PC-9 (cell line): ENCODE measurements at regions of chr5 and their contacts with region 1.

Region 1: GRCh38 chr5:72268753-72269410 is 51.2 kb downstream of the MRPS27 start:
- DNase-seq: peak; percentile 61 to 66
- H3K4me3 ChIP-seq: no peak overlapping the region
- H3K27ac ChIP-seq: no peak overlapping the region
- H3K4me1 ChIP-seq: no peaks in the 10 kb centered on the region
- H3K27me3 ChIP-seq: no peaks in the 10 kb centered on the region
- CTCF ChIP-seq: peak; percentile 89

Region 2: DNA sequence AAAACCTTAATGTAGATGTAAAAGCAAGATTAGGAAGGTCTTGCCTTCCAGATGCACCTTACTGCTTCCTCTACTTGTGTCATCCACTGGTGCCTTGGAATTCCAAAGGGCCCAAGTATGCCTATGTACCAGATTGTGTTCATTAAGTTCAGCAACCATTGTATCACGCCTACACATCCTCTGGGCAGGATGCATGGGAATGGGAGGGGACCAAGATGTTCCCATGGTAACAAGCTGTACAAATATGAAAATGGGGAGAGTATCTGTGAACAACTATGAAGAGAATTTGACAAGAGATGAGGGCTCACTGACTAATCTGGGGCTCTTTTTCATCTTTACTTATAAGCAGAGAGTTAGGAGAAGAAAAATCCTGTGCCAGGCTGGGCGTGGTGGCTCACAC is 299.4 kb before region 1 on chr5:
- CTCF ChIA-PET with region 1: no interaction called
- POLR2A ChIA-PET with region 1: no interaction called
- intact Hi-C with region 1: no loop called
- DNase-seq: no peak
- H3K4me3 ChIP-seq: no peak overlapping the region
- H3K27ac ChIP-seq: no peak overlapping the region
- H3K4me1 ChIP-seq: no peaks in the 10 kb centered on the region
- H3K27me3 ChIP-seq: no peaks in the 10 kb centered on the region
- CTCF ChIP-seq: no peak

Region 3: DNA sequence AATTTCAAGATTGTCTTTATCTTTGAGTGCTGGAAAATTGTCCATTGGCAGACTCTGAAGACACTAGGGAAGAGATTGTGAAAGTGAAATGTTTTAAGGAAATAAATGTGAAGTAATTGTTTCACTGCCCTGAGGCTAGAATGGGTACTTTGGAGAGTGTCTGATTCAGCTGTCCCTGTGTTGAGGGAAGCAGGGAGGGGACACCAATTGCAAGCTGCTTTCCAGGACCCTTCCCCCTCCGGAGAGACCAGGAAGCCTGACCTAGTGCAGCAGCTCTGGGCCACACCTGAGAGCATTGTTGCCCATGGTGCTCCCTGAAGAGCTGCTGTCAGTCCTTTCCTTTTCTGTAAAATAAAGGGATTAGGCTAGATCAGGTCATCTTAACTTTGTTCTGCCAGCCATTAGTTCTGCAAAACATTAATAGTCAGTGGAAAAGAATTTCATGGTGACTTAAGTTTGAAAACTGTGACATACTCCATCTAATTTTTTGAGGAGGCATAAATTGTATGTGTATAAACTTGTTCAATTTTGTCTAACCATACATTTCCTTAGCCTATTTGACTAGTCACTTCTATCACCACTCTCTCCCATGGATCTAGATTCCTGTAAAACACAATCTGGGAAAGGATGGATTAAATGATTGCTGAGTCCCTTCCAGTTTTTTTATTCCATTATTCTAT is 142.8 kb before region 1 on chr5:
- CTCF ChIA-PET with region 1: no interaction called
- POLR2A ChIA-PET with region 1: no interaction called
- intact Hi-C with region 1: loop called (anchors 1 kb)
- DNase-seq: peak; percentile 66 to 81
- H3K4me3 ChIP-seq: no peak overlapping the region
- H3K27ac ChIP-seq: peak overlapping the region; percentile 46
- H3K4me1 ChIP-seq: peaks cover 25% of the 10 kb centered on the region
- H3K27me3 ChIP-seq: no peaks in the 10 kb centered on the region
- CTCF ChIP-seq: no peak

Region 4: GRCh38 chr5:72138943-72139521 is 129.8 kb before region 1 on chr5:
- CTCF ChIA-PET with region 1: no interaction called
- POLR2A ChIA-PET with region 1: no interaction called
- intact Hi-C with region 1: loop called (anchors 2 kb)
- DNase-seq: no peak
- H3K4me3 ChIP-seq: no peak overlapping the region
- H3K27ac ChIP-seq: no peak overlapping the region
- H3K4me1 ChIP-seq: peaks cover 27% of the 10 kb centered on the region
- H3K27me3 ChIP-seq: no peaks in the 10 kb centered on the region
- CTCF ChIP-seq: no peak

Region 5: DNA sequence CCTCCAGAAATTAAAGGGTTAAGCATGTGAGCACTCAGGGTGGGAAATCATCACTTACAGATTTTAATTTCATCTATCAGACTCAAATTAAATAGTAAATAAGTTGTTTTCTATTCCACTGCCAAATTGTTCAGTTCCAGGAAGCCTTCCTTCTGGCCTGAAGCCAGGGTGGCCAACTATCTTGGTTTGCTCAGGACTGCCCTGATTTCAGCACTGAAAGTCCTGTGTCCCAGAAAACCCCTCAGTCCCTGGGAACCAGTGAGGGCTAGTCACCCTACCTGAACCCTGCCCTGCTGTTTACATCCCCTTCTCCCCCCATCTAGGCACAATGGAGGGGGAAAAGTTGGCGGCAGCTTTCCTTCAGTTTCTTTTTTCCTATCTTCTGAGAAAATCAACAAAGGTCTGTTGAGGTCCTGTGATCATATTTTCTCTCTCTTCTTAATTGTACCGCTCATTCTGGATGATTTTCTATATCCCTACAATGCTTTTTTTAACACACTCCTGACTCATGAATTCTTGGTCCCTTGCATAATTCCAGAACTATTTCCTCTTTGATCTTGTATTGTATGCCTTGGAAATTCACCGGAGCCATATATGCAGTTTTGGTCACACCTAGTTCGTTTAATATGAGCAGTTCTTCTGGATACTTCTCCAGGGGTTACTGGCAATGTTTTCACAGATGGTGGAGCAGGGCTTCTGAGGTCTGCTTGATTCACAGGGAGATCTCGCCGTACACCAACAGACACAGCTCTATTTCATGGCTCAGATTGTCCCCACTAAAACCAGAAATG is 57.8 kb before region 1 on chr5:
- CTCF ChIA-PET with region 1: no interaction called
- POLR2A ChIA-PET with region 1: interaction called, 6 read pairs
- intact Hi-C with region 1: loop called (anchors 2 kb)
- DNase-seq: peak; percentile 50 to 87
- H3K4me3 ChIP-seq: peak overlapping the region; percentile 2; the same call in 1 of the 2 replicates
- H3K27ac ChIP-seq: peak overlapping the region; percentile 83
- H3K4me1 ChIP-seq: peaks cover 37% of the 10 kb centered on the region
- H3K27me3 ChIP-seq: no peaks in the 10 kb centered on the region
- CTCF ChIP-seq: no peak

Region 6: DNA sequence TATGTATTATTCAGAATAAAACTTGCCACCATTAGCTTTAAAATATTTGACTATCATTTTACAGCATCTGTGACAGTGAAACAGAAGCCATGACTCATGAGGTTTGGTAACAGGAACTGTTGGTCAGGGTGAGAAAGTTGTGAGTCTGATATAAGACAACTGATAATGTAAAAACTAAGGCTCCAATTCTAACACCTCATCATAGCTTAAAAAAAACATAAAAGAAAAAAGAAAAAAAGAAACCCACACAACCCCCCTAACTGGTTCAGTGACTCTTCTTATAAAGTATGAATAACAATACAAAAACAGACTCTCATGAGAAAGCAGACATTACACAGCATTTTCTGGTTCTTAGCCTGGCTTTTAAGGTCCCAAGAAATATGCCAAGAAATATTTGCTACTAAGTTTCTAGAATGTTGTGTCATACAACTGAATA is 34.6 kb before region 1 on chr5:
- CTCF ChIA-PET with region 1: no interaction called
- POLR2A ChIA-PET with region 1: no interaction called
- intact Hi-C with region 1: loop called (anchors 2 kb)
- DNase-seq: peak; percentile 25 to 95
- H3K4me3 ChIP-seq: peak overlapping the region; percentile 25; the same call in 1 of the 2 replicates
- H3K27ac ChIP-seq: peak overlapping the region; percentile 99
- H3K4me1 ChIP-seq: peaks cover 52% of the 10 kb centered on the region
- H3K27me3 ChIP-seq: no peaks in the 10 kb centered on the region
- CTCF ChIP-seq: no peak